Dendritic cell treated with granulocyte-macrophage colony-stimulating factor and Interleukin-4, amounts not matched to agents 40 ng/mL and 50 ng/mL, for 4 days (primary cell): ENCODE measurements at regions of chr4 and their contacts with region 1.

Region 1: GRCh38 chr4:110516106-110516922 is 40.4 kb downstream of the ENPEP start:
- H3K4me3 Mint-ChIP-seq: peak overlapping the region; percentile 37
- H3K27ac Mint-ChIP-seq: no peak overlapping the region
- H3K4me1 Mint-ChIP-seq: peaks cover 5% of the 10 kb centered on the region
- H3K27me3 Mint-ChIP-seq: peaks cover 27% of the 10 kb centered on the region

Region 2: GRCh38 chr4:109998867-109999584 is 517.3 kb before region 1 on chr4:
- intact Hi-C with region 1: loop called (anchors 1 kb)
- H3K4me3 Mint-ChIP-seq: no peak overlapping the region
- H3K27ac Mint-ChIP-seq: no peak overlapping the region
- H3K4me1 Mint-ChIP-seq: peaks cover 22% of the 10 kb centered on the region
- H3K27me3 Mint-ChIP-seq: peaks cover 63% of the 10 kb centered on the region

Region 3: DNA sequence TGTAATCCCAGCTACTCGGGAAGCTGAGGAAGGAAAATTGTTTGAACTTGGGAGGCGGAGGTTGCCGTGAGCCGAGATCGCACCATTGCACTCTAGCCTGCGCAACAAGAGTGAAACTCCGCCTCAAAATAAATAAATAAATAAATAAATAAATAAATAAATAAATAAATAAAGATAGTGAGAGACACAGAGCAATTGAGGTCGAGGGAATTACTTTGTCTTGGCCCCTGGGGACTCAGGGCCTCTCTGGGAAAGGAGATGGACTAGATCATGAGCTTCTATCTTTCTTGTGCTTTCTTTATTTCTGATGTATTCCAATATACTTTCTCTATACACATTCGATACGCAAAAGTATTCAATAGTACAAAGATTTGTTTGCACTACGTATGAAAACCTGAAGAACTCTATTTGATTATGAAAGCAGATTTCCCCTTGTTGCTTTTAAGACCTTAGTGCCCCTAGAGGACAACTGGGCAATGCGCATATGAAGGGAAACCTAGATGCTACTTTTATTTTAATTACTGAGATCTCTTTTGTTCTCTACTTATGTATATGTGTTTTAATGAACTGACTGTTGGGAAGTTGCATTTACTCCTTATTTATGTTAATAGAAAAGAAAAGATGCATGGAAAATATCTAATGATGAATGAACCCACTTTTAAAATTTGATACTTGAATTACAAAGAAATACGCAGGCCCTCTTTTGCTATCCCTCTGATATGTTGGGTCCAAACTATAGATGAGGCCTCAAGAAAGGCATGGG is 305.1 kb before region 1 on chr4:
- intact Hi-C with region 1: loop called (anchors 5 kb)
- H3K4me3 Mint-ChIP-seq: no peak overlapping the region
- H3K27ac Mint-ChIP-seq: no peak overlapping the region
- H3K4me1 Mint-ChIP-seq: no peaks in the 10 kb centered on the region
- H3K27me3 Mint-ChIP-seq: peaks cover 44% of the 10 kb centered on the region

Region 4: DNA sequence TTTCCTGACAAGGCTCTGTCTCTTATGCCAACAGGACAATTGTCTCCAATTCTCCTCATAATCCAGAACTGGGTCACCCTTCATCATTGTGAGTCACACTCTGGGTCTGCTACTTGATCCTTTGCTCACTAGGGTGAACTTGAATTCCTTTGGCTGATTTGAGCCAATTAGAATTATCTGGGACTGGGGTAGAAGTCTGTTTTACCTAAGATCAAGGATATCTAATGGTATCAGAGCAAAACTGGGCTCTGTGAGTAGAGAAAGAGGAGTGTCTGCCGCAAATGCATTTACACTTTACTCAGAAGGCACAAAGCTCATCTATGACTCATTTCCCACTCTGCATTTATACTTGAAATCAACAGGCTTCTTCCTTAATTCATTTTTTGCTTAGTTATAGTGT is 33.9 kb after region 1 on chr4:
- intact Hi-C with region 1: no loop called
- H3K4me3 Mint-ChIP-seq: no peak overlapping the region
- H3K27ac Mint-ChIP-seq: no peak overlapping the region
- H3K4me1 Mint-ChIP-seq: no peaks in the 10 kb centered on the region
- H3K27me3 Mint-ChIP-seq: peaks cover 4% of the 10 kb centered on the region